Common myeloid progenitor, CD34-positive (primary cell): ENCODE measurements at regions of chr3 and their contacts with region 1.

Region 1: DNA sequence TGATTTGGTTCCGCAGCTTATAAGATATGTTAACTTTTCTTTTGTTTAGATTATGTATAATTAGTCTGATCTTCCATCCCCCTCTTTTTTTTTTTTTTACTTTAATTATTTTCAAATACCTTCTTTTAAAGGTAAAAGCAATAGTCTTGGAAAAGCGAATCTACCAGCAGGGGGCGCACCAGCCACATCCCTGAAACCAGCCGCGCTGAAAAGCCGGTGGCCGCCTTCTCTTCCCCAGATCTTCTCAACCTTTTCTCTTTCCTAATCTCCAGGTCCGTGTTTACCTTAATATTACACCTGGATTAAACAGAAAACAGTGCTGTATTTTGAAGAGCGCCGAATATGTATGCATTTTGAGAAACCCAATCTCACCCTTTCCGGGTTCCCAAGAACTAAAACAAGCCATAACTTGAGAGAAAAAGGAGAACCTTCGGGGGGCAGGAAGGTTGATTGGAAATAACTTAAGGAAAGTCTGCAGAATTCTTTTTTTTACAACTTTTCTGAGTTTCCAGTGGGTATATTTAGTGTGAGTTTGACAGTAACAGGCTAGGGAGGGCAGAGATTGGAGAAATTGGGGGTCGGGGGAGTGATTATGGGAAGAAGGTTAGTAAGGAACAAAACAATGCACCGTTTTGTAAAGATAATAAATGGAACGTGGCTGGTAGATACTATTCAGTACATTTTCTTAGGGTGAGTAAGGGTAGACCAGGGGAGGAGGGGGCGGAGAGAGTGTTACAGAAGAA is 2.0 kb upstream of the SOX2 start:
- DNase-seq: peak; percentile 69 to 78 (median 71)
- H3K4me3 ChIP-seq: peak overlapping the region in 1 of 7 experiments; percentile 8
- H3K27ac ChIP-seq: no peak overlapping the region
- H3K4me1 ChIP-seq: peaks cover 0 to 13% (median 4%) of the 10 kb centered on the region in 4 experiments
- H3K27me3 ChIP-seq: peaks cover 35 to 97% (median 60%) of the 10 kb centered on the region in 5 experiments

Region 2: GRCh38 chr3:181726351-181727330 is 16.9 kb after region 1 on chr3:
- CTCF ChIA-PET with region 1: interaction called, 14 read pairs
- POLR2A ChIA-PET with region 1: no interaction called
- DNase-seq: peak in 1 of 3 donors; percentile 56
- H3K4me3 ChIP-seq: peak overlapping the region in 5 of 7 experiments; percentile 47 to 68 (median 63)
- H3K27ac ChIP-seq: no peak overlapping the region
- H3K4me1 ChIP-seq: peaks cover 2 to 13% (median 9%) of the 10 kb centered on the region in 4 experiments
- H3K27me3 ChIP-seq: peaks cover 41 to 99% (median 77%) of the 10 kb centered on the region in 5 experiments

Region 3: GRCh38 chr3:181797431-181797830 is 87.7 kb after region 1 on chr3:
- CTCF ChIA-PET with region 1: no interaction called
- POLR2A ChIA-PET with region 1: no interaction called
- DNase-seq: no peak
- H3K4me3 ChIP-seq: no peak overlapping the region
- H3K27ac ChIP-seq: no peak overlapping the region
- H3K4me1 ChIP-seq: no peaks in the 10 kb centered on the region
- H3K27me3 ChIP-seq: no peaks in the 10 kb centered on the region

Region 4: GRCh38 chr3:181823716-181824115 is 114.0 kb after region 1 on chr3:
- CTCF ChIA-PET with region 1: no interaction called
- POLR2A ChIA-PET with region 1: no interaction called
- DNase-seq: no peak
- H3K4me3 ChIP-seq: no peak overlapping the region
- H3K27ac ChIP-seq: no peak overlapping the region
- H3K4me1 ChIP-seq: no peaks in the 10 kb centered on the region
- H3K27me3 ChIP-seq: no peaks in the 10 kb centered on the region